ENCODE measurements at regions of chr5 and their contacts with region 1.

Region 1: GRCh38 chr5:177317959-177318377 is 6.3 kb upstream of the MXD3 start:
- DNase-seq: peak; percentile 79 to 82
- ATAC-seq: peak; percentile 51 to 76; a peak in 5 of 6 replicates
- H3K4me3 ChIP-seq: no peak overlapping the region
- H3K27ac ChIP-seq: no peak overlapping the region
- H3K4me1 ChIP-seq: peaks cover 2% of the 10 kb centered on the region; the same call in 2 of the 3 replicates
- CTCF ChIP-seq: peak; percentile 96
- EP300 ChIP-seq: no peak
- POLR2A ChIP-seq: no peak
- RAD21 ChIP-seq: peak; percentile 88 to 92

Region 2: DNA sequence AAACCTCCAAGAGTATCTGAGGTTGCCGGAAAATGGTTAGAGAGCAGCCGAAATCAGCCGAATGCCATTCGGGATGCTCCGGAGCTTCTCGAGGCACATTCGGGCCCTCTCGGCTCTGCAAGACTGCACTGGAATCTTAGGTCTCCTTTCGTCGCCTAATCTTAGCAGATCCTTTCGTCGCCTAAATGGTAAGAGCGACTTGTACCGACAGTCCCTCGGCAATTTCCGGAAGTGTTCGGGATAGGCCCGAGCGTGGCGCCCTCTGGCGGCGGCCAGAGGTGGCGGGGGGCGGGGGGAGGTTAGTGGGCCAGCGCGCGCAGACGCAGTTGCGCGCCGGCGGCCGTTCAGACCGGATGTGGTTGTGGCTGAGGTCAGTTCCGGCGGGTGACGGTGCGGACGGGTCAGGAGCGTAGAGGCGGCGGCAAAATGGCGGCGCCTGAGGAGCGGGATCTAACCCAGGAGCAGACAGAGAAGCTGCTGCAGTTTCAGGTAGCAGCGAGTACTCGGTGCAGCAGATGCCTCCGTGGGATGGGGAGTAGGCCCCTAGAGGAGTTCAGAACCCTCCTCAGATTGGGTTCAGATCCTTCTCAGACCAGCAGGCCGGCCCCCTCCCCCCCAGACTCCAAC is 869.9 kb before region 1 on chr5 and contains the start of gene FAF2:
- CTCF ChIA-PET with region 1: no interaction called
- POLR2A ChIA-PET with region 1: no interaction called
- DNase-seq: peak; percentile 99
- ATAC-seq: peak; percentile 95 to 97
- H3K4me3 ChIP-seq: peak within 1 kb of the TSS; percentile 83
- H3K27ac ChIP-seq: peak within 1 kb of the TSS; percentile 96
- H3K4me1 ChIP-seq: peaks cover 24% of the 10 kb centered on the region
- CTCF ChIP-seq: peak; percentile 96
- EP300 ChIP-seq: no peak
- POLR2A ChIP-seq: peak; percentile 83
- RAD21 ChIP-seq: peak in 1 of 2 experiments; percentile 28; a peak in 2 of 5 replicates
- polyA plus RNA-seq, gene FAF2: 90.3 and 90.6 TPM in 2 replicates

Region 3: DNA sequence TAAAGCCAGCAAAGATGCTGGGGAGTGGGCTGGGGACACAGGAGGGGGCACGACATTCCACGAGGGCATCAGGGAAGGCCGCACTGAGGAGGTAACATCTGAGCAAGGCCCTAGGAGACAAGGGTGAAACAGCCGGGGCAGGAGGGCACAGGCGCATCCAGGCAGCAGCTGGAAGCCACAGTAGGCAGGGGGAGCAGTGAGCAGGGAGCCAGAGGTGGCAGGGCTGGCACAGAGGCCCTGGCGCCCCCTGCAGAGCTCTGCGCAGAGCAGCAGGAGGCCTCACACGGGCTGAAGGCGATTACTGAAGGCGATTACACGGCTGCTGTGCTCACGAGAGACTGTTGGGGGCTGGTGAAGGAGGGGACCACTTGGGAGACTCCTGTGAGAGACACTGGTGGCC is 18.1 kb after region 1 on chr5:
- CTCF ChIA-PET with region 1: interaction called, 111 read pairs
- POLR2A ChIA-PET with region 1: no interaction called
- DNase-seq: peak; percentile 62 to 74
- ATAC-seq: peak; percentile 90 to 97
- H3K4me3 ChIP-seq: no peak overlapping the region
- H3K27ac ChIP-seq: no peak overlapping the region
- H3K4me1 ChIP-seq: 0 out of 3 replicates have a peak, but pooled peaks cover 10% of the 10 kb centered on the region
- CTCF ChIP-seq: peak; percentile 57
- EP300 ChIP-seq: no peak
- POLR2A ChIP-seq: no peak
- RAD21 ChIP-seq: peak; percentile 58 to 60

Region 4: DNA sequence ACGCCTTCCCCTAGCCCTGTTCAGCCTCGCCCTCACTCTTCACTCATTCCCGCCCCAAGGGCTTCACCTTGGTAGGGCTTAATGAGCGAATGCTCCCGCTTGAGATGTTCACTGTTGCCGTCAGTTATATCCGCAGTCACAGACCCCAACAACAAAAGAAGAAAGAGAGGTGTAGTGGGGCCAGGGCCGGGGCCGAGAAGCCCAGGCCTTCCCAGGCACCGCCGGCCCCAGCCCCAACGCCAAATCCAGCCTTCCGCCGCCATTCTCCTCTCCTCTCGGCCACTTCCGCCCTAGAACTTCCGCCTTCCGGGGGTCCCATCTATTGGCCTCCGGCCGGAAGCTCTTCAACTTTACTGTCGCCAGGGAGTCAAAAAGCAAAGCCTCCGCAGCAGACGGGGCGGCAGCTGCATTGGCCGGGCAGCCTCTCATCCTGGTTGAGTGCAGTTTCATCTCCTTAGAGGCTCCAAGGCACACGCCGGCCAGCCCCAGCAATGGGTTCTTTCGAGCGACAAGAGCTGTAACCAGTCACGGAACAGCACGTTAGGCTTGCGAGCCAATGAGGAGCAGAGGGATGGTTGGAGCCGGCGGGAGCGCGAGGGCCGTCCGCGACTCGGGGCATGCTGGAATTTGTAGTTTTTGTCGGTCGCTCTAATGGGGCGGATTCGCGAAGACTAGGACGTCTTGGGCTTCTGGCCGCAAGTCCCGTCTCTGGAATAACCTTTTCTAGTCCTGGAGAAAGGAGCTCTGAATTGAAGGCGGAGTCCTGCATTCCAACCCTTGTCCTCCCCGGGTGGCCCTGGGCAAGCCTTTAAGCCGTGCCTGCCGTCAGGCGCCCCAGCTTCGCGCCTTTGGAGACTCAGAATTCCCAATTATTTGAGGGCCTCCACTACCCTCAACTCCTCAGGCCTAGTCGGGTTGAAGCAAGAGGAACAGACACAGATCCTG is 33.7 kb after region 1 on chr5 and contains the start of gene LMAN2:
- CTCF ChIA-PET with region 1: interaction called, 21 read pairs
- POLR2A ChIA-PET with region 1: no interaction called
- DNase-seq: peak; percentile 94 to 97
- ATAC-seq: peak; percentile 98 to 99
- H3K4me3 ChIP-seq: peak within 1 kb of the TSS; percentile 78
- H3K27ac ChIP-seq: peak within 1 kb of the TSS; percentile 90 to 94
- H3K4me1 ChIP-seq: peaks cover 31% of the 10 kb centered on the region
- CTCF ChIP-seq: no peak
- EP300 ChIP-seq: no peak
- POLR2A ChIP-seq: peak; percentile 73
- RAD21 ChIP-seq: no peak
- polyA plus RNA-seq, gene LMAN2: 123 and 172 TPM in 2 replicates

Region 5: DNA sequence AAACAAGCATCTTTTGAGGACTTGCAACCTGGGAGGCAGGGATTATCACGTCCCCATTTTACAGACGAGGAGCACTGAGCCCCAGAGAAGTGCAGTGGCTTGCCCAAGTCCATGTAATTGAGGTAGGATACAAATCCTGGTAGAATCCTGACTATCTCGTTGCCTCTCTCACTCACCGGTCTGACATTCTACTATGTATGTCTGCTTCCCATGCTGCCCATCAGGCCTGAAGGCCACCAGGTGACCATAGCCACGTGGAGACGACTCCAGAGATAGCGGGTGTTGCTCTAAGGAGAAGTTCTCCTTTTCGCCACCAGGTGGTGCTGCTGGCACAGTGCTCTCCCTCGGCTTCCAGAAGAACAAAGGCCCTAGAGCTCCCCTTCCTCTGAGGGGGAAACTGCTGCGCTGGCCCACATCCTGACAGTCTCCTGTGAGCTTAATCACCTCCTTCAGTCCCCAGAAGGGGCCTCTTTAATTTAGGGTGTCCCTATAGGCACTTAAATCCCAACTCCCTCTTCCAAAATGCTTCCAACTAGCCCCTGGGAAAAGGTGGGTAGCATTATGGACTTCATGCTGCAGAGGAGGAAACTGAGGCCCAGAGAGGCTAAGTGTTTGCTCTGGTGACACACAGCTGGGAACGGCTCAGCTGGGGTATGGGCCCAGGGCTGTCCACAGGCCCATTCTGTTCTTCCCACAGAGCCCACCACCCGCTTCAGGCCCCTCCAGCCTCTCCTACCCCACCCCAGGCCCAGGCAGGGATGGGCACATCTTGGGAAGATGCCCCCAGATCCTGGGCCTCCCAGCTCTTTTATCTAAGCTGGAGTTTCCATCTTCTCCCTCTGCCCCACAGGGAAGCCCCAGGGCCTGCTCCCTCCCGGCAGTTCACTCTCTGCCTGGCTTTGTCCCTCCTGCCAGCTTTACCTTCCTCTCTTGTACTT is 72.7 kb after region 1 on chr5:
- CTCF ChIA-PET with region 1: interaction called, 14 read pairs
- POLR2A ChIA-PET with region 1: no interaction called
- DNase-seq: peak; percentile 87 to 98
- ATAC-seq: peak; percentile 81 to 94
- H3K4me3 ChIP-seq: no peak overlapping the region
- H3K27ac ChIP-seq: peak overlapping the region; percentile 44 to 72; a peak in 5 of 6 replicates
- H3K4me1 ChIP-seq: peaks cover 18% of the 10 kb centered on the region
- CTCF ChIP-seq: peak; percentile 97
- EP300 ChIP-seq: no peak
- POLR2A ChIP-seq: no peak
- RAD21 ChIP-seq: peak; percentile 89 to 92